ENCODE measurements at regions of chr6 and their contacts with region 1.

Region 1: DNA sequence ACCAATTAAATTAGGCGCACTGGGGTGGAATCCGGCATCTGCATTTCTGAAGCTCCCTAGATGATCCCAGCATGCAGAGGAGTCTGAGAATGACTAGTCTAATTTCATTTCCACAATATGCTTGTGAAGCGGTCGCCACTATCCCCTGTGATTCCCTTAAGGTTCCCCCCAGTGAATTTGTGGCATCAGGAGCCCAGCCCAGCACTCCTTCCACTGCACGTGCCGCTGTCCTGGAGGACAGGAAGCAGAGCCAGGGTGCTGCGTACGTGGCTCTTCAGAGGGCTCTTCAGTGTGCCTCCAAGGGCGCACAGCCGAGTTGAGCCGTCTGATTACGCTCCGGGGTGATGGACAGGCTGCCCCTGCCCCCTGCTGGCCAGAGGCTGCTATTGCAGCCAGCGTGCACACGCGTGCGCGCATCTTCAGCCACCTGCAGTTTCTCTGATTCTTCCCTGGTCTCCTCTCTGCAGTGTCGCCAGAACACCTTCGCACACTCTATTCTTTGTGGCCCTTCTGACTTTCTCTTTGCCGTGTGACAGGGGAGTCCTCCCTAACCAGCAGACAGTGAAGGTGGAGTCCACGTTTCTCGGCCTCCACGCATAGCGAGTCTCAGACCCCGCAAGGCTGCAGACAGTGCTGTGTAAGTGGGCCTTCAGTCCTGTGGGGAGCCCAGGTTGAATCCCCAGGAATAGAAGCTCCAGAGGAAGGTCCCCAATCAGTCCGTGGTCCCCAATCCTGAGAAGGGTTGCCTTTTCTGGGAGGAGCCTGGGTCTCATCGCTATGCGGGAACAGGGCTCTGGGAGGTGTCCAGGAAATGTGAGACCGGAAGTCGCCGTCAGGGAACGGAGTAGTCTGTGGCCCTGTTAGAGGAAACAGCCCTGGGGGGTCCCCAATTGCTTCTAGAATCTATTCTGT is 16.5 kb upstream of the NCR2 start:
- DNase-seq: peak; percentile 63
- H3K4me3 ChIP-seq: peak overlapping the region in 2 of 3 experiments; percentile 19 to 32
- H3K27ac ChIP-seq: no peak overlapping the region
- H3K4me1 ChIP-seq: no peaks in the 10 kb centered on the region
- H3K27me3 ChIP-seq: no peaks in the 10 kb centered on the region
- CTCF ChIP-seq: peak; percentile 99

Region 2: GRCh38 chr6:41002216-41002615 is 316.7 kb before region 1 on chr6:
- CTCF ChIA-PET with region 1: no interaction called
- dilution Hi-C with region 1: no loop called
- in situ Hi-C with region 1: no loop called
- intact Hi-C with region 1: loop called (anchors 2 kb)
- DNase-seq: no peak
- H3K4me3 ChIP-seq: no peak overlapping the region
- H3K27ac ChIP-seq: no peak overlapping the region
- H3K4me1 ChIP-seq: peaks cover 6% of the 10 kb centered on the region
- H3K27me3 ChIP-seq: no peaks in the 10 kb centered on the region
- CTCF ChIP-seq: no peak

Region 3: DNA sequence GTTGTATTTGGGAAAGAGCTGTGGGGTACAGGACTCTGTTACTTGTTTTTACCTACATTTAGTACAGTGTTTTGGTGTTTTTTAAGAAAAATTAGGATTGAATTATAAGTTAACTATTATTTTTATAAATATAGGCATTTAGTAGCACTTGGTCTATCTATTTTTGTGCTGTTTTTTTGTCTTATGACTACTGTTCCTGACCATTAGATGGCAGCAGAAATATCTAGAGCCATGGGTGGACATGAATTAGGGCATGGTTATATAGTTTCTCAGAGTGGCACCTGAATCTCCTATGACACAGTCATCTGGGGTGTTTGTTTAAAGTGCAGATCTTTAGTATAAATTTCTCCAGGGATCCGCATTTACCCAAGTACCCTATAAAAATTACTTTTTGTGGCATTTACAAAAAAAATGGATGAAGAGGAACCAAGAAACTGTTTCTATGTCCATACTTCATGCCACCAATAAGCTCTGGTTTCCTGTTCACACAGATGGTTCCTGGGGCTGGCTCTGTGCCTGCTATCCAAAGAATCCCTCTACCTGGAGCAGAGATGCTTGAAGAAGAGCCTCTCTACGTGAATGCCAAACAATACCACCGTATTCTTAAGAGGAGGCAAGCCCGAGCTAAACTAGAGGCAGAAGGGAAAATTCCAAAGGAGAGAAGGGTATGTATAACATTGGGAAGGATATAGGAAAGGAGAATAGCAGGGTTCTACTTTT is 226.3 kb before region 1 on chr6:
- CTCF ChIA-PET with region 1: no interaction called
- dilution Hi-C with region 1: loop called (anchors 25 kb)
- in situ Hi-C with region 1: loop called (anchors 5 to 25 kb)
- intact Hi-C with region 1: loop called (anchors 1 kb)
- DNase-seq: peak; percentile 31
- H3K4me3 ChIP-seq: no peak overlapping the region
- H3K27ac ChIP-seq: peak overlapping the region; percentile 1
- H3K4me1 ChIP-seq: peaks cover 17% of the 10 kb centered on the region
- H3K27me3 ChIP-seq: no peaks in the 10 kb centered on the region
- CTCF ChIP-seq: peak; percentile 40 to 63

Region 4: GRCh38 chr6:41200296-41200900 is 118.5 kb before region 1 on chr6:
- CTCF ChIA-PET with region 1: no interaction called
- dilution Hi-C with region 1: no loop called
- in situ Hi-C with region 1: no loop called
- intact Hi-C with region 1: no loop called
- DNase-seq: peak; percentile 24
- H3K4me3 ChIP-seq: no peak overlapping the region
- H3K27ac ChIP-seq: no peak overlapping the region
- H3K4me1 ChIP-seq: peaks cover 18% of the 10 kb centered on the region
- H3K27me3 ChIP-seq: no peaks in the 10 kb centered on the region
- CTCF ChIP-seq: no peak

Region 5: GRCh38 chr6:41252401-41253169 is 66.3 kb before region 1 on chr6:
- CTCF ChIA-PET with region 1: no interaction called
- dilution Hi-C with region 1: loop called (anchors 5 kb)
- in situ Hi-C with region 1: no loop called
- intact Hi-C with region 1: no loop called
- DNase-seq: no peak
- H3K4me3 ChIP-seq: no peak overlapping the region
- H3K27ac ChIP-seq: no peak overlapping the region
- H3K4me1 ChIP-seq: peaks cover 4% of the 10 kb centered on the region
- H3K27me3 ChIP-seq: peaks cover 3% of the 10 kb centered on the region
- CTCF ChIP-seq: no peak

Region 6: GRCh38 chr6:41306187-41306854 is 12.6 kb before region 1 on chr6:
- CTCF ChIA-PET with region 1: no interaction called
- dilution Hi-C with region 1: no loop called
- in situ Hi-C with region 1: no loop called
- intact Hi-C with region 1: loop called (anchors 1 kb)
- DNase-seq: peak; percentile 52
- H3K4me3 ChIP-seq: no peak overlapping the region
- H3K27ac ChIP-seq: no peak overlapping the region
- H3K4me1 ChIP-seq: no peaks in the 10 kb centered on the region
- H3K27me3 ChIP-seq: peaks cover 3% of the 10 kb centered on the region
- CTCF ChIP-seq: peak; percentile 52 to 54